ENCODE measurements at regions of chr21 and their contacts with region 1.

Region 1: DNA sequence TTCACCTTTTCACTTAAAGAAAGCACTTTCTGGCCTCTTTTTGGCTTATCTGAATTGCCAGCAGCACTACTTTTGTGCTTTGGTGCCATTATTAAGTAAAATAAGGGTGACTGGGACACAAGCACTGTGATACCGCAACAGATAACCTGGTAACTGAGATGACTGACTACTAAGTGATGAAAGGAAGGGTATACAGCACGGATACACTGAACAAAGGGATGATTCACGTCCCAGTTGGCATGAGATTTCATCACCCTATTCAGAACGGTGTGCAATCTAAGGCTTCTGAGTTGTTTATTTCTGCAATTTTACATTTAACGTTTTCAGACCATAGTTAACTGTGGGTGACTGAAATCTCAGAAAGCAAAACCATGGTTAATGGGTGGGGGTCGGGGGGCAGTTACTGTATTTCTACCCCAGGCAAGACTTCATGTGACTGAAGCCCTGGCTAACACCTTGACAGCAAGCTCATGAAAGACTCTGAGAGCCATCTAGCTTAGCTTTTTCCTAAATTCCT is 102.8 kb downstream of the CLIC6 start:
- DNase-seq: peak; percentile 80
- ATAC-seq: peak; percentile 91
- H3K4me3 ChIP-seq: peak overlapping the region in 1 of 2 experiments; percentile 28; a peak in 1 of 4 replicates
- H3K27ac ChIP-seq: no peak overlapping the region
- H3K4me1 ChIP-seq: peaks cover 18 to 28% of the 10 kb centered on the region in 2 experiments
- H3K27me3 ChIP-seq: no peaks in the 10 kb centered on the region
- CTCF ChIP-seq: no peak
- POLR2A ChIP-seq: no peak
- RAD21 ChIP-seq: no peak

Region 2: DNA sequence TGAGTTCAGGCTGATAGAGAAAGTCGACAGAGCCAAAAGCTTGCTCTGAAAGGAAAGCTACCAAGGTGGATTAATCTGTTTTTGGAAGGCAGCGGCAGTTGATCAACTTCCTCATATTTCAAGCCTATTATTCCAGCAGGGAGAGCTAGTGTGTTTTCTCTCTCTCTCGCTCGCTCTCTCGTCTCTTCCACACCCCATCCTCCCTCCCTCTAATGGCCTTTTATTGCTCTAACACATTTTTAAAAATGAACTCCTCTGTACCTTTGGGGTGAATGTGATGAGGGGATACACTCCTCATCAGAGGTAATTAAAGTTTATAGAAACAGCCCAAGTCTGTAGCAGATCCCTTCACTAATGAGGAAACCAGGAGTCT is 23.6 kb after region 1 on chr21:
- CTCF ChIA-PET with region 1: no interaction called
- POLR2A ChIA-PET with region 1: interaction called, 21 read pairs
- RAD21 ChIA-PET with region 1: no interaction called
- intact Hi-C with region 1: no loop called
- DNase-seq: no peak
- ATAC-seq: peak; percentile 10
- H3K4me3 ChIP-seq: peak overlapping the region in 1 of 2 experiments; percentile 28; a peak in 1 of 4 replicates
- H3K27ac ChIP-seq: peak overlapping the region; percentile 61
- H3K4me1 ChIP-seq: peaks cover 50 to 57% of the 10 kb centered on the region in 2 experiments
- H3K27me3 ChIP-seq: no peaks in the 10 kb centered on the region
- CTCF ChIP-seq: peak in 2 of 3 experiments; percentile 6 to 13; a peak in 1 of 6 replicates
- POLR2A ChIP-seq: no peak
- RAD21 ChIP-seq: peak; percentile 25

Region 3: GRCh38 chr21:34807146-34807880 is 35.7 kb after region 1 on chr21:
- CTCF ChIA-PET with region 1: no interaction called
- POLR2A ChIA-PET with region 1: interaction called, 6 read pairs
- RAD21 ChIA-PET with region 1: interaction called in 1 of 2 experiments, 3 read pairs
- intact Hi-C with region 1: loop called (anchors 2 kb)
- DNase-seq: no peak
- ATAC-seq: peak; percentile 73
- H3K4me3 ChIP-seq: peak overlapping the region; percentile 13 to 44
- H3K27ac ChIP-seq: peak overlapping the region; percentile 94
- H3K4me1 ChIP-seq: peaks cover 63 to 83% of the 10 kb centered on the region in 2 experiments
- H3K27me3 ChIP-seq: no peaks in the 10 kb centered on the region
- CTCF ChIP-seq: no peak
- POLR2A ChIP-seq: no peak
- RAD21 ChIP-seq: no peak

Region 4: GRCh38 chr21:34836103-34836932 is 64.7 kb after region 1 on chr21:
- CTCF ChIA-PET with region 1: no interaction called
- POLR2A ChIA-PET with region 1: no interaction called
- RAD21 ChIA-PET with region 1: no interaction called
- intact Hi-C with region 1: loop called (anchors 2 kb)
- DNase-seq: peak; percentile 97
- ATAC-seq: peak; percentile 95
- H3K4me3 ChIP-seq: peak overlapping the region; percentile 23 to 35
- H3K27ac ChIP-seq: peak overlapping the region; percentile 79
- H3K4me1 ChIP-seq: peaks cover 36 to 49% of the 10 kb centered on the region in 2 experiments
- H3K27me3 ChIP-seq: no peaks in the 10 kb centered on the region
- CTCF ChIP-seq: no peak
- POLR2A ChIP-seq: no peak
- RAD21 ChIP-seq: no peak